Stomach (tissue), 19 donors: ENCODE measurements at regions of chr6 and their contacts with region 1.

Region 1: DNA sequence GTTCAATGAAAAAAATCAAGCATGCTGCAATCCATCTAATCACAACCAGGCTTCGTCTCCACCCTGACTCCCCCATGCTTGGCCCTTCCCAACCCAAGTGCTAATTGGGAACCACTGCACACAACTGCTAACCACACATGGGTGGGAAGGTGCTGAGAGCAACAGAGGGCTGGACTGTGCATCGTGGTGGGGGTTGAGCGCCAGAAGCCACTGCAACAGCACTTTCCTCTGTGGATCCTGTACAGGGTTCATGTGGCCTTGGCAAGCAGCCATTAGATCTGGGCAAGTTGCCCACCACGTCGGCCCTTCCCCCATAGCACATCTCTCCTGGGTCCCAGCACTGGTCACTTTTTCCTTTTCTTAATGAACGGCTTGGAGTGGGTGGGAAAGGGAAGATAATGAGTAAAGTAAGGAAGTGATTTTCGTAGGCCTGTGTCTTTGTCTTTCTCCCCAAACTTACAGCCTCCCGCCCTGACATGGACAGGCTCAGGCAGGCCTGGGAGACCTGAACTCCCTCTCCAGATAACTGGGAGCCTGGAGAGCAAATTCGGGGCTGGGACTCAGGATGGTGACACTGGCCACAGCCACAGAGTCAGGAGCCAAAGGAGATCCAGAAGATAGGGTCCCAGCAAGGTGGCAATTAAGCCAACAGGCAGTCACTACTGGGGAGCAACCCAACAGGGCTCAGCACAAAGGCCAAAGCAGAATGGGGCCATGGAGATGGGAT is 34.4 kb upstream of the MRPS10 start:
- DNase-seq: peak; percentile 56 to 89
- H3K4me3 ChIP-seq: no peak overlapping the region
- H3K27ac ChIP-seq: peak overlapping the region in 4 of 5 donors; percentile 25 to 49 (median 46)
- H3K4me1 ChIP-seq: peaks cover 7 to 22% (median 11%) of the 10 kb centered on the region in 4 donors
- H3K27me3 ChIP-seq: no peaks in the 10 kb centered on the region
- CTCF ChIP-seq: no peak
- EP300 ChIP-seq: no peak
- POLR2A ChIP-seq: no peak

Region 2: DNA sequence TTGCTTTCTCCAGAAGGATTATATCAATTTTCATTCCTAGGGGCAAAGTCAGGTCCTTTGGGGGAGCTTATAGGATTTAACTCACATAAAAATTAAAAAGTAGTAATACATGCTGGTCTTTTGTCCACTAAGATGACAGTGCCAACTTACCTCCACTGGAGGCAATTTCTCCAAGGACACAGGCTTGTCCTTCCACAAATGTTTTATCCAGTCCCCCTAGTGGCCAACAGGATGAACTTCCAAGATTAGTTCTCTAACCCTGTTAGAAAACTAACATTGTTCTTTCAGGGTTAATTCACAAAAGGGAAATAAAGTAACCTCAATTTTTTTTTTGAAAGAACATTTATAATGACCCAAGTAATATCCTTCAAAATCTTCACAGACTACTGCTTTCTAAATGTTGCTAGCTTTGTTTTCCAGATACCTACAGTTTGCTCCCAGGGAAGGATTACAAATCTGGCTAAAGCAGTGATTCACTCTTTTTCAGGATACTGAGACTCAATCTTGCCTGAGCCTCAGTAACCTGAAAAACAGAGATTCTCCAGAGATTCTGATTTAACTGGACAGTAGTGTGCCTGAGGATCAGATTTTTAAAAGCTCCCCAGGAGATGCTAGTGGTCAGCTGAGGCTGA is 280.1 kb after region 1 on chr6:
- intact Hi-C with region 1: loop called (anchors 10 kb)
- DNase-seq: peak in 1 of 2 donors; percentile 79
- H3K4me3 ChIP-seq: no peak overlapping the region
- H3K27ac ChIP-seq: no peak overlapping the region
- H3K4me1 ChIP-seq: peaks cover 0 to 3% (median 0%) of the 10 kb centered on the region in 4 donors
- H3K27me3 ChIP-seq: no peaks in the 10 kb centered on the region
- CTCF ChIP-seq: peak in 5 of 7 experiments; percentile 68 to 96 (median 84)
- EP300 ChIP-seq: no peak
- POLR2A ChIP-seq: no peak